ENCODE measurements at regions of chr7 and their contacts with region 1.

Region 1: DNA sequence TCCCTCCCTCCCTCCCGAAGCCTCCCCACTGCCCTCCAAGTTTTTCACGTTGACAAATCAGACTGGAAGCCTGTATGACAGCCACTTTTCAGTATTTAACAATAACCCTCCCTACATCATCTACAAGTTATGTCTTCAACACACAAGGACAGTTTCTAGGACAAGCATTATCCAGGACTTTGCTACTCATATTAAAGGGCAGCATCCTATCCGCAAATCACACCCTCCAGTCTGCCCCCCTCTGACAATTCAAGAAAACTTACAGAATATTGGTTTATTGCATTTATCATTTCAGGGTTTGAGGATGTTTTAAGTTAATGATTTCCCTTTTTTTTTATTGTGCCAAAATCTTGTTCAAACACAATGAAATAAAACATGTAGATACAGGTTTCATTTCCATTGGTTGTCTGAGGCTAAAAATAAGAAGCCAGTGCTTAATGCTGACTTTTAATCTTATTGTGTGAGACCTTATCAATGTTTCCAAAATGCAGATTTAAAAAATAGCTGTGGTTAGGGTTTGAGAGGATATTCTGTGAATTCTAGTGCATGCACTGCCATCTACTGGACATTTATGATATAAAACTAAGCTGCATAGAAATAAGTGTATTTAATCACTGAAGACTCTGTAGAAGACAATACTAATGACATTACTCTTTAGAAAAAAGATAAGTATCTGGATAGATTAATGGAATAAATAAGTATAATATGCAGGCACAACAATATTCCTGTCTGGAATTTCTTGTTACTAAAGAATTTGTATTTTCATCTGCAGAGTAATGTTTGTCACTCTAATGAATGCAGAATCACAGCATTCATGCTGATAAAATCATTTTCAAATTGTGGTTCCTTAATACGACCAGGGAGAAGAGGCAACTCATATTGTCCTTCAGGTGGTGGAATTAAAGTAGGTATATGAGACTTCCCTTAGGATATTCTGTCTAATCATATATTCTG is 64.1 kb downstream of the CAV1 start:
- DNase-seq: no peak
- ATAC-seq: peak; percentile 38
- H3K4me3 Mint-ChIP-seq: no peak overlapping the region
- H3K27ac Mint-ChIP-seq: no peak overlapping the region
- H3K4me1 Mint-ChIP-seq: peaks cover 26% of the 10 kb centered on the region
- H3K27me3 Mint-ChIP-seq: peaks cover 17% of the 10 kb centered on the region

Region 2: GRCh38 chr7:116173051-116174028 is 415.6 kb before region 1 on chr7:
- CTCF ChIA-PET with region 1: interaction called, 33 read pairs
- POLR2A ChIA-PET with region 1: no interaction called
- DNase-seq: peak; percentile 60
- ATAC-seq: peak; percentile 65
- H3K4me3 Mint-ChIP-seq: no peak overlapping the region
- H3K27ac Mint-ChIP-seq: no peak overlapping the region
- H3K4me1 Mint-ChIP-seq: peaks cover 24% of the 10 kb centered on the region
- H3K27me3 Mint-ChIP-seq: peaks cover 25% of the 10 kb centered on the region

Region 3: DNA sequence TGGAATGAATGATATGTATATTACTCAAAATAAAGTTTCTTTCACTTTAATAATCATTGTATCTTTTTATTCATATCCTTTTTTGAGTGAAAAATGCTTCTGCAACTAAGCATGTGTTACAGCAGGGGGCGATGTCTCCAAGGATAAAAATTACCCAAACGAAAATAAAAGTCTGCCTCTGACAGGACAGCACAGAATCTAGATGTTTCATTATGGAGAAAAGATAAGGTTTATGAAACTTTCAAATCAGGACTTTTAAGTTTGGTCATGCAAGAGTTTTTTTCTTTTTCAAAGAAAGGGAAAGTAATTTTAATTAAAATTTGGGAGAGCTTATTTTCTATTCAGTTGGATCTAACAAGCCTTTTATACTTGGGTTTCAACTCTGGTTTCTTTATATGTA is 330.2 kb before region 1 on chr7:
- CTCF ChIA-PET with region 1: interaction called, 17 read pairs
- POLR2A ChIA-PET with region 1: no interaction called
- DNase-seq: peak; percentile 54
- ATAC-seq: no peak
- H3K4me3 Mint-ChIP-seq: no peak overlapping the region
- H3K27ac Mint-ChIP-seq: no peak overlapping the region
- H3K4me1 Mint-ChIP-seq: peaks cover 8% of the 10 kb centered on the region
- H3K27me3 Mint-ChIP-seq: peaks cover 2% of the 10 kb centered on the region

Region 4: GRCh38 chr7:116576350-116577319 is 12.3 kb before region 1 on chr7:
- CTCF ChIA-PET with region 1: interaction called, 15 read pairs
- POLR2A ChIA-PET with region 1: no interaction called
- DNase-seq: no peak
- ATAC-seq: no peak
- H3K4me3 Mint-ChIP-seq: no peak overlapping the region
- H3K27ac Mint-ChIP-seq: no peak overlapping the region
- H3K4me1 Mint-ChIP-seq: peaks cover 9% of the 10 kb centered on the region
- H3K27me3 Mint-ChIP-seq: peaks cover 6% of the 10 kb centered on the region

Region 5: DNA sequence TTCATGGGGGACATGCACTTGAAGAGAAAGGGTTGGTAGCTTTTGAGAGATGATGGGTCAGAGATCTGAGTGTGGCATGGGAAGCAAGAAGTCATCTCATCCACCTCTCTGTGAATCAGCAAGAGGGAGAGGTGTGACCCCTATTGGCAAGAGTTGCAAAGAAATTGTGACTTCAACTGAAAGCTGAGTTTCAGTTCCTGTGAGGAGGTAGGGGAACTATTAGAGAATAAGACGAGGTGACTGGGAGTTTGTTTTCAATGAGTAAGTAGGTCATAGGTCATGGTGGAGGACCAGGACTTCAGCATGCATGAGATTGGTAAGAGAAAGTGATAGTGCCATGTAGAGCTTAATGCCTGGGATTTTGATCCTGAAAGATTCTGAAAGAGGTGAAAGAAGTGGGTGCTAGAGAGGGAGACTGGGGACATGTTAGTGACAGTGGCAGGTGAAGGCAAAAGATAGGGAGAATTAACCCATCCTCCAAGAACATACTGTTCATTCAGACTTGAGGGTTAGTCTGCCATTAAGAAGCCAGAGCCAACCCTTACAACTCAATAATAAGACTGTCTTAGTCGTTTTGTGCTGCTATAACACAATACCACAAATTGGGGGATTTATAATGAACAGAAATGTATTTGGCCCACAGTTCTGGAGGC is 198.0 kb after region 1 on chr7:
- CTCF ChIA-PET with region 1: interaction called, 20 read pairs
- POLR2A ChIA-PET with region 1: no interaction called
- DNase-seq: peak; percentile 21
- ATAC-seq: no peak
- H3K4me3 Mint-ChIP-seq: no peak overlapping the region
- H3K27ac Mint-ChIP-seq: no peak overlapping the region
- H3K4me1 Mint-ChIP-seq: no peaks in the 10 kb centered on the region
- H3K27me3 Mint-ChIP-seq: peaks cover 11% of the 10 kb centered on the region

Region 6: DNA sequence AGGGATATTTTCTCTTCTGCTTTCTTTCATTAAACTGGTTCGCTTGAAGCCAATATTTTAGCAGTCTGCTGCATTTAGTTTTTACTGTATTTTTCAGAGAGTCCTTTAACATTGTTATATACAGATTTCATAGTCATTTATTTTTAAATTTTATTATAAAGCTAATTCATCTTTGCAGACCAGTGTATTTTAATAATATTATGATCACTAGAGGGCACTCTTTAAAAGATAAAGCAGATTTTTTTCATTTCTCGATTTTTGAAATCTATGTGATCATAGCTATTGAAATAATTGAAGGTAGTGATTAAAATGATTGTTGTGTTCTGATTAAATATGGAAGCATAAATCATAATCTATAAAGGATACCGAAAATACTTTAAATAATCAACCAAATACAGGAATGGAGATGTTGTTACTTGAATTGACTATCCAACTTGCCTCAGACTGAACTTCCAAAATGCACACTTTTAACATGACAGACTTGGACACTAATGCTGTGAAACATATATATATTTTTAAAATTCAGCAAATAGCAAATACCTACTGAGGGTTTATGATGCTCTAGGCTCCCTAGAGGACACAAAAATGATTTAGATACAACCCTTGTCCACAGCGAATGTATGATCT is 399.6 kb after region 1 on chr7:
- CTCF ChIA-PET with region 1: no interaction called
- POLR2A ChIA-PET with region 1: no interaction called
- DNase-seq: no peak
- ATAC-seq: no peak
- H3K4me3 Mint-ChIP-seq: no peak overlapping the region
- H3K27ac Mint-ChIP-seq: no peak overlapping the region
- H3K4me1 Mint-ChIP-seq: no peaks in the 10 kb centered on the region
- H3K27me3 Mint-ChIP-seq: peaks cover 2% of the 10 kb centered on the region

Measured in activated CD8-positive, alpha-beta T cell treated with anti-CD3 and anti-CD28 coated beads, Interleukin-2, amount 10 ng/mL, durations not matched to agents 7 days and 5 days (primary cell).